Naive thymus-derived CD4-positive, alpha-beta T cell (primary cell): ENCODE measurements at regions of chr10 and their contacts with region 1.

Region 1: GRCh38 chr10:125982260-125982948 is 86.0 kb downstream of the FANK1 start:
- DNase-seq: peak in 5 of 9 donors; percentile 19 to 39 (median 27)
- ATAC-seq: peak; percentile 63
- H3K4me3 ChIP-seq: no peak overlapping the region
- H3K4me3 Mint-ChIP-seq: no peak overlapping the region
- H3K27ac ChIP-seq: no peak overlapping the region
- H3K27ac Mint-ChIP-seq: no peak overlapping the region
- H3K4me1 ChIP-seq: no peaks in the 10 kb centered on the region
- H3K4me1 Mint-ChIP-seq: no peaks in the 10 kb centered on the region
- H3K27me3 ChIP-seq: no peaks in the 10 kb centered on the region
- H3K27me3 Mint-ChIP-seq: peaks cover 0 to 26% (median 10%) of the 10 kb centered on the region in 5 donors

Region 2: GRCh38 chr10:126459878-126460481 is 477.6 kb after region 1 on chr10:
- CTCF ChIA-PET with region 1: no interaction called
- POLR2A ChIA-PET with region 1: no interaction called
- intact Hi-C with region 1: no loop called
- DNase-seq: no peak
- ATAC-seq: no peak
- H3K4me3 ChIP-seq: no peak overlapping the region
- H3K4me3 Mint-ChIP-seq: no peak overlapping the region
- H3K27ac ChIP-seq: no peak overlapping the region
- H3K27ac Mint-ChIP-seq: no peak overlapping the region
- H3K4me1 ChIP-seq: no peaks in the 10 kb centered on the region
- H3K4me1 Mint-ChIP-seq: no peaks in the 10 kb centered on the region
- H3K27me3 ChIP-seq: no peaks in the 10 kb centered on the region
- H3K27me3 Mint-ChIP-seq: peaks cover 0 to 16% (median 13%) of the 10 kb centered on the region in 5 donors

Region 3: DNA sequence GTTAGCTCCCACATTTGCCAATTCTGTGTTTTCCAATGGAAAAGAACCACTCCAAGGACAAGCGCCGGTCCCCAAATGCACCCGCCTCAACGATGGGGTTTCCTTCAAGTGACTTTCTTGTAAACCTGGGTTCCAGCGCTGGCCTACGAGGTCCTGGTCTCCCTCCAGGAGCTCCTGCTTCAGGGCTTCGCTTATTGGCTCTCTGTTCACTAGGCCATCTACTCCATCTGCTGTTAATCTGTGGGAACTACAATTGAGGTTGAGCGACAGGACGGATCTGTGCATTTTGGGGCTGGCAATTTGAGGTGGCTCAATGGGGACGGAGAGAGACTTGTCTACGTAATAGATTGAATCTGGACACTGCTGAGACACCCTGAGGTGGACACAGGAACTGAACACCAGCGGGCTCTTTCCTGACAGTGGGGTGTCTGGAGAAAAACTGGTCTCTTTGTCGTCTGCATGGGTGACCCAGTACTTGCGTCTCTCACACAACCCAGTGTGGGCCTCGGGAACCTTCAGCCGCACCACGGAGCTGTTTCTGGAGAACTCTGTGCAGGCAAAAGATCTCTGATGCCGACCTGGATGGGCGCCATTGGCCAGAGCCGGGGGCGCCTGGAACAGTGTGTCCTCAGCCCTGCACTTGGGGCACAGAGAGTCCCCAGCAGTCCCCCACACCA is 521.8 kb after region 1 on chr10:
- CTCF ChIA-PET with region 1: no interaction called
- POLR2A ChIA-PET with region 1: no interaction called
- intact Hi-C with region 1: loop called (anchors 2 to 10 kb)
- DNase-seq: peak in 1 of 9 donors; percentile 15
- ATAC-seq: no peak
- H3K4me3 ChIP-seq: no peak overlapping the region
- H3K4me3 Mint-ChIP-seq: no peak overlapping the region
- H3K27ac ChIP-seq: no peak overlapping the region
- H3K27ac Mint-ChIP-seq: no peak overlapping the region
- H3K4me1 ChIP-seq: no peaks in the 10 kb centered on the region
- H3K4me1 Mint-ChIP-seq: no peaks in the 10 kb centered on the region
- H3K27me3 ChIP-seq: no peaks in the 10 kb centered on the region
- H3K27me3 Mint-ChIP-seq: peaks cover 0 to 7% (median 0%) of the 10 kb centered on the region in 5 donors

Region 4: DNA sequence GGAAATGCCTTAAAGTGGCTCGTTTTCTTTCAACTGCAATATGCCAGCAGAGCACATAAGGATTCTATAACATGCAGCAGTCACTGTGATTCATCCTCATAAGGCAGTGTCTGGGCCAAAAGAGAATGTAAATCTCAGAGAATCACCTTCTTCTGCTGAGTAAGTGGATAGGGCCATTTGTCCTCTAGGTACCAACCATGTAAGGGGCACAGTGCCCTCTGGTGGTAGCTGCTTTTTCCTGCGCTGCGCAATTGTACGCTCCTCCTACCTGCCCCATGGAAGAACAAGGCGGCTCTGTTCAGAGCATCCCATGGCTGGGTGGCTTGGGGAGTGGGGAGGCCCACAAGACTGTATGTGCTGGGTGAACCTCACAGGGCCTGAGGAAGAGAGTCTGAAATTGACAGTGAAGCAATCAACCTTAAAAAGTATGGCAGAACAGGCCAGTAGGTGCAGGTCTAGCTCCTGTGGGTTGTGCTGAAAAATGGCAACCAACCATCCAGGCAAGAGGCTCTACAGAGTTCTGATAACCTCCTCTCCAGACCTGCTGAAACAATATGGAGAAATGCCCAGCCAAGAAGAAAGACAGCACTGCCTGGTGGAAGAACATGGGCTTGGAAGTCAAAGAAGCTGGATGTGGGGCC is 766.7 kb after region 1 on chr10:
- CTCF ChIA-PET with region 1: no interaction called
- POLR2A ChIA-PET with region 1: no interaction called
- intact Hi-C with region 1: loop called in 1 of 2 experiments (anchors 1 kb)
- DNase-seq: peak in 2 of 9 donors; percentile 10 to 36
- ATAC-seq: peak; percentile 46
- H3K4me3 ChIP-seq: no peak overlapping the region
- H3K4me3 Mint-ChIP-seq: no peak overlapping the region
- H3K27ac ChIP-seq: no peak overlapping the region
- H3K27ac Mint-ChIP-seq: no peak overlapping the region
- H3K4me1 ChIP-seq: no peaks in the 10 kb centered on the region
- H3K4me1 Mint-ChIP-seq: no peaks in the 10 kb centered on the region
- H3K27me3 ChIP-seq: no peaks in the 10 kb centered on the region
- H3K27me3 Mint-ChIP-seq: peaks cover 0 to 7% (median 0%) of the 10 kb centered on the region in 5 donors